CD8-positive, alpha-beta memory T cell (primary cell): ENCODE measurements at regions of chr17 and their contacts with region 1.

Region 1: GRCh38 chr17:75904749-75905521 is at the start of gene MRPL38:
- DNase-seq: peak; percentile 86 to 97 (median 94)
- H3K4me3 ChIP-seq: peak within 1 kb of the TSS; percentile 64
- H3K4me3 Mint-ChIP-seq: peak within 1 kb of the TSS; percentile 81 to 94 (median 88)
- H3K27ac ChIP-seq: peak within 1 kb of the TSS; percentile 69
- H3K27ac Mint-ChIP-seq: peak within 1 kb of the TSS; percentile 84 to 97 (median 91)
- H3K4me1 ChIP-seq: peaks cover 13% of the 10 kb centered on the region
- H3K4me1 Mint-ChIP-seq: peaks cover 3 to 14% (median 5%) of the 10 kb centered on the region in 3 donors
- H3K27me3 ChIP-seq: no peaks in the 10 kb centered on the region
- H3K27me3 Mint-ChIP-seq: peaks cover 0 to 2% of the 10 kb centered on the region in 2 donors
- total RNA-seq, gene MRPL38: 171 to 180 TPM

Region 2: DNA sequence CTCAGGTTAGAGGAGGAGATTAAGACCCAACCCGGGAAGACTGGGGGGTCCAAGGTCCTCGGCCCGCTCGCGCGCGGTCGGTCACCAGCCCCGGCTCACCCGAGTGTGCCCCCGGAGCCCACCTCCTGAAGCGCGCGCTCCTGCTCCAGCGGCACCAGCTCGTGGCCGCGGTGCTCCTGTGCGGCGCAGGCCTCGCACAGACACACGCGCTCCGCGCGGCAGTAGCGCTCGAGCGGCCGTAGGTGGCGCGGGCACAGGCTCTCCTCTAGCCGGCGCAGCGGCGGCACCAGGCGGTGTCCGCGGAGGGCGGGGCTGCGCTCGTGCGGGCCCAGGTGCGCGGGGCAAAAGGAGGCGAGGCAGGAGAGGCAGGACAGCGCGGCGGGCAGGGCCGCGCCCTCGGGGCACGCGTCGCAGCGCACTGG is 27.2 kb before region 1 on chr17:
- CTCF ChIA-PET with region 1: interaction called, 51 read pairs
- POLR2A ChIA-PET with region 1: no interaction called
- DNase-seq: peak; percentile 49 to 79 (median 67)
- H3K4me3 ChIP-seq: peak overlapping the region; percentile 61
- H3K4me3 Mint-ChIP-seq: peak overlapping the region; percentile 83 to 90 (median 86)
- H3K27ac ChIP-seq: peak overlapping the region; percentile 43
- H3K27ac Mint-ChIP-seq: peak overlapping the region; percentile 76 to 96 (median 87)
- H3K4me1 ChIP-seq: peaks cover 40% of the 10 kb centered on the region
- H3K4me1 Mint-ChIP-seq: peaks cover 35 to 59% (median 39%) of the 10 kb centered on the region in 3 donors
- H3K27me3 ChIP-seq: no peaks in the 10 kb centered on the region
- H3K27me3 Mint-ChIP-seq: peaks cover 0 to 5% of the 10 kb centered on the region in 2 donors

Region 3: GRCh38 chr17:76000016-76000754 is 95.2 kb after region 1 on chr17:
- CTCF ChIA-PET with region 1: interaction called, 28 read pairs
- POLR2A ChIA-PET with region 1: interaction called, 4 read pairs
- DNase-seq: peak; percentile 36 to 67 (median 51)
- H3K4me3 ChIP-seq: no peak overlapping the region
- H3K4me3 Mint-ChIP-seq: no peak overlapping the region
- H3K27ac ChIP-seq: no peak overlapping the region
- H3K27ac Mint-ChIP-seq: no peak overlapping the region
- H3K4me1 ChIP-seq: peaks cover 12% of the 10 kb centered on the region
- H3K4me1 Mint-ChIP-seq: peaks cover 11 to 14% (median 12%) of the 10 kb centered on the region in 3 donors
- H3K27me3 ChIP-seq: no peaks in the 10 kb centered on the region
- H3K27me3 Mint-ChIP-seq: no peaks in the 10 kb centered on the region

Region 4: GRCh38 chr17:76005263-76006149 is 100.6 kb after region 1 on chr17:
- CTCF ChIA-PET with region 1: interaction called, 28 read pairs
- POLR2A ChIA-PET with region 1: interaction called, 4 read pairs
- DNase-seq: peak; percentile 60 to 85 (median 72)
- H3K4me3 ChIP-seq: no peak overlapping the region
- H3K4me3 Mint-ChIP-seq: no peak overlapping the region
- H3K27ac ChIP-seq: no peak overlapping the region
- H3K27ac Mint-ChIP-seq: peak overlapping the region in 2 of 8 donors; percentile 41 to 70
- H3K4me1 ChIP-seq: no peaks in the 10 kb centered on the region
- H3K4me1 Mint-ChIP-seq: peaks cover 0 to 6% (median 2%) of the 10 kb centered on the region in 3 donors
- H3K27me3 ChIP-seq: no peaks in the 10 kb centered on the region
- H3K27me3 Mint-ChIP-seq: no peaks in the 10 kb centered on the region